ENCODE measurements at regions of chr9 and their contacts with region 1.

Region 1: GRCh38 chr9:22401671-22402070 is 45.0 kb upstream of the DMRTA1 start:
- DNase-seq: no peak
- ATAC-seq: no peak
- H3K4me3 ChIP-seq: no peak overlapping the region
- H3K27ac ChIP-seq: no peak overlapping the region
- H3K4me1 ChIP-seq: no peaks in the 10 kb centered on the region
- H3K27me3 ChIP-seq: no peaks in the 10 kb centered on the region
- CTCF ChIP-seq: no peak

Region 2: DNA sequence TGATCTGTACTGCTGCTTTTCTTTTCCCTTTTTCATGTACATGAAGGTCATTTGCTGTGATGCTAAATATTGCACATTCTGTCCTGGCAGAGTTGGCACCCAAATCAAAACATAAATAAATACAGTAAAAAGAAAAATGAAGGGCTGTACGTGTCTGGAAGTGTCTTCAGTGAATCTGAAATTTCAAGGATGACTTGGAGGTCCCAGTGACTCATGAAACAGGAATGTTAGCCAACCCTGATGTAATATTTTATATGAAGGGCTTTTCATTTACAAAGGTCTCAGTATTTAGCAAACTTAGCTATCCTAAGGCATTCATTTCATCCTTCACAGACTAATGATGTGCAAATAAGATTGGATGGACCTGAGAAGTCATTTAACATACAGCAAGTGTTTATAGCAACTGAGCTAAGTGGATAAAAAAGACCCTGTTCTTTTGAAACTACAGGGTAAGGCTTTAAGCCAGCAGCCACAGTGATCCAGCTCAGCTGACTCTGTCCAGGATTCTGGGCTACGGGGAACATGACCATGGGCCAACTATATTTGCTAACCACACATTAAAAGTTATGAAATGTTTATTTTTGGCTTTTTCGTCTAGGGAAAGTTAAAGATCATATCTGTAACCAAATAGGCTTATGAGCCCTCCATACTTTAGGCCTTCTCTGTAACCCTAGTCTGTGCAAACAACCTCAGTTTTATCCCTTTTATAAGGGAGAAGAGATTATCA is 59.0 kb before region 1 on chr9:
- CTCF ChIA-PET with region 1: no interaction called
- POLR2A ChIA-PET with region 1: no interaction called
- intact Hi-C with region 1: loop called (anchors 5 kb)
- DNase-seq: peak; percentile 88
- ATAC-seq: peak; percentile 88
- H3K4me3 ChIP-seq: peak overlapping the region; percentile 18; the same call in 1 of the 2 replicates
- H3K27ac ChIP-seq: peak overlapping the region; percentile 83
- H3K4me1 ChIP-seq: peaks cover 25% of the 10 kb centered on the region
- H3K27me3 ChIP-seq: no peaks in the 10 kb centered on the region
- CTCF ChIP-seq: no peak

Region 3: DNA sequence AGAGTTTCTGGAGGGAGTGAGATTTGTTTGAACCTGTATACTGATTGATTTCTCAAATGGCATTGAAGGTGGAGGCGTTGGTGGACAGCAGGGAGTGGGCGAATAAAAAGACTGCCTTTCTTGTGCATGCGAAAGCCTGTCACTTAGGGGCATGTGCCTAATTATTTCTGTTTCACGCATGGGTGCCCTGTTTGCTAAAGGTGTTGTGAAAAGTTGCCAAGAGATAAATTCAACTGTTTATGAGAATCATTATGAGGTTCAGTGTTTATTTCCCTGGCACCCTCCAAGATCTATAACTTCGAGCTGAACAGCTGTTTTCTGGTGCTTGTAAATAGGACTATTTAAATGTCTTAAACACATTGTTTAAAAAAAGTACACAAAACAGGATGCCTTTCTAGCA is 22.4 kb before region 1 on chr9:
- CTCF ChIA-PET with region 1: no interaction called
- POLR2A ChIA-PET with region 1: no interaction called
- intact Hi-C with region 1: no loop called
- DNase-seq: no peak
- ATAC-seq: no peak
- H3K4me3 ChIP-seq: no peak overlapping the region
- H3K27ac ChIP-seq: no peak overlapping the region
- H3K4me1 ChIP-seq: peaks cover 10% of the 10 kb centered on the region
- H3K27me3 ChIP-seq: no peaks in the 10 kb centered on the region
- CTCF ChIP-seq: no peak